Sigmoid colon (tissue), 7 donors: ENCODE measurements at regions of chr1 and their contacts with region 1.

Region 1: GRCh38 chr1:153922972-153923925 is at the start of gene GATAD2B:
- DNase-seq: peak; percentile 100
- H3K4me3 ChIP-seq: peak within 1 kb of the TSS; percentile 75 to 99 (median 89)
- H3K27ac ChIP-seq: peak within 1 kb of the TSS; percentile 86 to 98 (median 94)
- H3K4me1 ChIP-seq: peaks cover 0 to 50% (median 42%) of the 10 kb centered on the region in 4 donors
- H3K27me3 ChIP-seq: no peaks in the 10 kb centered on the region
- CTCF ChIP-seq: no peak
- EP300 ChIP-seq: peak in 1 of 4 donors; percentile 40
- POLR2A ChIP-seq: no peak
- total RNA-seq, gene GATAD2B: 16.4 to 37.4 (median 19.8) TPM

Region 2: DNA sequence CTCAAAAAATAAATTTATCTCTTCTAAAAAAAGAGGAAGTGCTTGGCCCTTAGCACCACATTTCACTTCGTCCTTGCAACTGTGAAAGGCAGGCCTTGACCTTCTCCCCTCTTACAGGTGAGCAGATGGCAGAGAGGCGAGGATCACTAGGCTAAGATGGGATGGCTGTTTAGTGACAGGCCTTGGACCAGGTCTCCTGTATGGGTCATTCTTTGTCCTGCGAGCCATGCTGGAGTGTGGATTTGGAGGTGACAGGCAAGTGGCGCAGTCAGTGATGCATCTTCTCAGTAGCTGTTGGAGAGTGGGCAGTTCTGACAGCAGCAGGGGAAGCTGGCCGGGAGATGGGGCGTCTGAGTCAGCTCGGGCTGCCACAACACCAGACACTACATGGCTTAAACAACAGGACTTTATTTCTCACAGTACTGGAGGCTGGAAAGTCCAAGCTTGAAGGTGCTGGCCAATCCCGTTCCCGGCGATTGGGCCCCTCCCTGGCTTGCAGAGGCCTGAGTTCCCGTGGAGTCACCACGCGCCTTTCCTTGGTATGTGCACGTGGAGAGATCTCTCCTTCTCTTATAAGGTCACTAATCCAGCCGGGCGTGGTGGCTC is 131.5 kb before region 1 on chr1:
- intact Hi-C with region 1: loop called (anchors 2 kb)
- DNase-seq: peak; percentile 68
- H3K4me3 ChIP-seq: peak overlapping the region in 1 of 4 donors; percentile 45
- H3K27ac ChIP-seq: peak overlapping the region; percentile 86 to 97 (median 92)
- H3K4me1 ChIP-seq: peaks cover 0 to 28% (median 26%) of the 10 kb centered on the region in 4 donors
- H3K27me3 ChIP-seq: peaks cover 0 to 3% (median 0%) of the 10 kb centered on the region in 3 donors
- CTCF ChIP-seq: no peak
- EP300 ChIP-seq: no peak
- POLR2A ChIP-seq: no peak

Region 3: GRCh38 chr1:153827168-153827964 is 95.9 kb before region 1 on chr1:
- intact Hi-C with region 1: loop called (anchors 5 kb)
- DNase-seq: no peak
- H3K4me3 ChIP-seq: no peak overlapping the region
- H3K27ac ChIP-seq: no peak overlapping the region
- H3K4me1 ChIP-seq: no peaks in the 10 kb centered on the region
- H3K27me3 ChIP-seq: no peaks in the 10 kb centered on the region
- CTCF ChIP-seq: no peak
- EP300 ChIP-seq: no peak
- POLR2A ChIP-seq: no peak

Region 4: DNA sequence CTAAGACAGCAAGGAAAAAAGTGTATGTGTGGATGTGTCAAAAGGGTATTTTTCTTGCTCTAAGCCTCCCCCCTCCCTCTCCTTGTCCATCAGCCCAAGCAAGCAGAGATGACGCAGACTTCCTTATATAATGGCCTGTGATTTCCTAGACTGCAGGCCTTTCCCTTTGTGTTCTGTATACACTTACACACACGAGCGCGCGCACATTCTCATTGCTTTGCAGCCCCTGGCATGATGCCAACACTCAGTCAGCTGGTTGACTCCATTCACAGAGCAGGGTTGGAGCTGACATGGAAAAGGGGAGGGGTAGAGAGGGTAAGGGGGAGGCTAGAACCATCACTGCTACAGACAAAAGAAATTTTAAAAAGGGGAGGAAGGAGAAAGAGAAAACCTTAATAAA is 42.3 kb before region 1 on chr1:
- intact Hi-C with region 1: loop called (anchors 5 kb)
- DNase-seq: peak; percentile 93
- H3K4me3 ChIP-seq: no peak overlapping the region
- H3K27ac ChIP-seq: peak overlapping the region in 3 of 4 donors; percentile 43 to 70 (median 59)
- H3K4me1 ChIP-seq: peaks cover 0 to 34% (median 31%) of the 10 kb centered on the region in 4 donors
- H3K27me3 ChIP-seq: no peaks in the 10 kb centered on the region
- CTCF ChIP-seq: no peak
- EP300 ChIP-seq: peak in 1 of 4 donors; percentile 38
- POLR2A ChIP-seq: no peak

Region 5: DNA sequence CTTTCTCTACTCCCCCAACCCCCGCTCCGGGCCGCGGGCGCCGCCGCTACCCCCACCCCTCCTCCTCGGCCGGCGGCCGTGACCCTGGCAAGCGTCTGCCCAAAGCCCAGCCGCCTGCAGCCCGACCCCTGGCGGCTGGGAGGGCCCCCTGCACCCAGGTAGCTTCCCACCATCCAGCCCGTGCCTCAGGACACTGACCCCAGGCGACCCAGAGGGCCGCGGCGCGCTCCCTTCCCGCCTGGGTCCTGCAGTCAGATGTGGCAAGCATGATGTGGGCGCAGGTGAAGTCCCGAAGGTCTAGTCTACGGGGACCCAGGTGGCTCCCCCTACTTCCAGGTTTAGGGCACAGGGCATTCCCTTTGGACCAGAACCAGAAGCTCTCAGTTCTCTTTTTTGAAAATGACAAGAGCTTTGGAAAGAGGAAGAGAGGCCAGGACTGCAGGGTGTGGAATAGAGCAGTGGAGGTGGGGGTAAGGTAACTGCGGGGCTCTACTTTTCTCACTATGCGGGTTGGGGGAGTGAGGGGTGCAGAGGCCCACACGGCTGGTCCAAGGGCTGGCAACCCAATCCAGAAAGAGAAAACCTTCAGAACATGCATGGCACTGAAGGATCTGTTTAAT is 23.5 kb after region 1 on chr1 and contains the start of gene DENND4B:
- intact Hi-C with region 1: loop called (anchors 1 kb)
- DNase-seq: peak; percentile 93
- H3K4me3 ChIP-seq: peak within 1 kb of the TSS; percentile 67 to 98 (median 94)
- H3K27ac ChIP-seq: peak within 1 kb of the TSS; percentile 98 to 100 (median 99)
- H3K4me1 ChIP-seq: peaks cover 0 to 29% (median 19%) of the 10 kb centered on the region in 4 donors
- H3K27me3 ChIP-seq: no peaks in the 10 kb centered on the region
- CTCF ChIP-seq: peak; percentile 77 to 99 (median 86)
- EP300 ChIP-seq: no peak
- POLR2A ChIP-seq: no peak
- total RNA-seq, gene DENND4B: 17.9 to 34.9 (median 23.1) TPM

Region 6: DNA sequence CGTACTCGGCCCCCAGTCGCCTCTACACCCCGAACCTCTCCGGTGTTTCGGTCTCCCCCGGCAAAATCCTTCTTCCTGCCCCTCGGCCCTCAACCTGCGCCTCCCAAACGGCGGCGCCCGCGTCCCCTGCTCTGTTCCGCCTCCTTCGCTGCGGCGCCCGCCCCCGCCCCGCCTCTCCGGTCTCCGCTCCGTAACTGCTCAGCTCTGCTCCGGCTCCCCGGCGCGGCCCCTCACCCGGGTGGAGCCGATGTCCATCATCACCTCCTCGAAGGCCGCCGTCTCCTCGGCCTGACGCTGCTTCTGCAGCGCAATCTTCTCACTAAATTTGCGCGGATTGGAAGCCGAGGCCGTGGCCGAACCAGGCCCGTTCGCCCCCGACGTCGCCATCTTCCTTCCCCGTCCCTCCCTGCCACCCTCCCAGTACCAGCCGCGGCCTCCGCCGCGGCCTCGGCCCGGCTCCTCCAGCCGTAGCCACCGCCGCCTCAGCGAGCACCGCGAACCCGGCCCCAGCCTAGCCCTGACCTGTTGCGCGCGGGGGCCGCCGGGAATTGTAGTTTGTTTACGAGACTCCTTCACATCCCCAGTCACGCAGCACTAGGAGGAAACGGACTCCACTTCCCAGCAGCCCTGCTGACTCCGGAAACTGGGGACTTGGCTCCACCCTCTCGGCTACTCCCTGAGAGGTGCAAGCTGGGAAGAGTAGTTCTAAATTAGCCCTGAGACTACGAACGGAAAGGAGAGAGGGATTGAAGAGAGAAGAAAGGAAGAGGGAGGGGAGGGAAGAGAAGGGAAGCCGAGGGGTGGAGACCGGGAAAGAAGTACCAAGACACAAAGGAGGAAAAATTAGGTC is 35.1 kb after region 1 on chr1 and contains the start of gene CRTC2:
- intact Hi-C with region 1: loop called (anchors 5 kb)
- DNase-seq: peak; percentile 100
- H3K4me3 ChIP-seq: peak within 1 kb of the TSS; percentile 77 to 98 (median 85)
- H3K27ac ChIP-seq: peak within 1 kb of the TSS; percentile 93 to 98 (median 97)
- H3K4me1 ChIP-seq: peaks cover 0 to 56% (median 51%) of the 10 kb centered on the region in 4 donors
- H3K27me3 ChIP-seq: no peaks in the 10 kb centered on the region
- CTCF ChIP-seq: no peak
- EP300 ChIP-seq: no peak
- POLR2A ChIP-seq: peak; percentile 66 to 79
- total RNA-seq, gene CRTC2: 13.7 to 23.3 (median 15.0) TPM

Region 7: DNA sequence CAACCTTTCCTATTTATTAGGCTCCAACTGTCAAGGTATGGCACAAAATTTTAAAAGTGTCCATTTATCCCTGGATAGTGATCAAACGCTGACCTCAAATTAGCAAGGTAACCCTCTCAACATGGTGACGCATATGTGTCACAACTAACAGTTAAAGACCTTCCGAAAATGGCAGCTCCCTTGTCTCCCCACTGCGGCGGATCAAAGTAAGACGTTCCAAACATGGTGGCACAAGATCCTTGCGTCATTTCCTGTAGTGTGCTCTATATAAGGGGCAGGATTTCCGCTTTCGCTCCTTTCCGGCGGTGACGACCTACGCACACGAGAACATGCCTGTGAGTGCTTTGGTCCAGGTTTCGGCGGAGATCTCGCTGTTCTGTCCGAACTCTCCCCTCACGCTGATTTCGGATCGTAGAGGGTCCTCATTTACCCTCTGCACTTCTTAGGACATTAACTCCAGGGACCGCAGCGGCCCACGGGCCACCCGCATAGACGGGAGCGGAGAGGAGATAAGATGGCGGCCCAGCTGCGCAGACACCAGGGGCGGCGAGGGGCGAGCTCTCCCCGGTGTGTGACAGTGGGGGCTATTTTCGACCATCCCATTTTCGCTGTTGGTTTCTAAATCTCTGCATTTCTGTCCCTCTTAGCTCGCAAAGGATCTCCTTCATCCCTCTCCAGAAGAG is 67.4 kb after region 1 on chr1 and contains the start of gene RPS27:
- intact Hi-C with region 1: loop called (anchors 2 kb)
- DNase-seq: peak; percentile 98
- H3K4me3 ChIP-seq: peak within 1 kb of the TSS; percentile 72 to 96 (median 80)
- H3K27ac ChIP-seq: peak within 1 kb of the TSS; percentile 90 to 95 (median 92)
- H3K4me1 ChIP-seq: peaks cover 0 to 45% (median 40%) of the 10 kb centered on the region in 4 donors
- H3K27me3 ChIP-seq: no peaks in the 10 kb centered on the region
- CTCF ChIP-seq: no peak
- EP300 ChIP-seq: peak in 2 of 4 donors; percentile 63 to 75
- POLR2A ChIP-seq: peak; percentile 99 to 100
- total RNA-seq, gene RPS27: 1,466 to 4,347 (median 3,611) TPM